ENCODE measurements at regions of chr1 and their contacts with region 1.

Region 1: GRCh38 chr1:26279456-26280332 is at the start of gene SH3BGRL3:
- DNase-seq: peak; percentile 95
- ATAC-seq: peak; percentile 82
- total RNA-seq, gene SH3BGRL3: 33.9 TPM

Region 2: DNA sequence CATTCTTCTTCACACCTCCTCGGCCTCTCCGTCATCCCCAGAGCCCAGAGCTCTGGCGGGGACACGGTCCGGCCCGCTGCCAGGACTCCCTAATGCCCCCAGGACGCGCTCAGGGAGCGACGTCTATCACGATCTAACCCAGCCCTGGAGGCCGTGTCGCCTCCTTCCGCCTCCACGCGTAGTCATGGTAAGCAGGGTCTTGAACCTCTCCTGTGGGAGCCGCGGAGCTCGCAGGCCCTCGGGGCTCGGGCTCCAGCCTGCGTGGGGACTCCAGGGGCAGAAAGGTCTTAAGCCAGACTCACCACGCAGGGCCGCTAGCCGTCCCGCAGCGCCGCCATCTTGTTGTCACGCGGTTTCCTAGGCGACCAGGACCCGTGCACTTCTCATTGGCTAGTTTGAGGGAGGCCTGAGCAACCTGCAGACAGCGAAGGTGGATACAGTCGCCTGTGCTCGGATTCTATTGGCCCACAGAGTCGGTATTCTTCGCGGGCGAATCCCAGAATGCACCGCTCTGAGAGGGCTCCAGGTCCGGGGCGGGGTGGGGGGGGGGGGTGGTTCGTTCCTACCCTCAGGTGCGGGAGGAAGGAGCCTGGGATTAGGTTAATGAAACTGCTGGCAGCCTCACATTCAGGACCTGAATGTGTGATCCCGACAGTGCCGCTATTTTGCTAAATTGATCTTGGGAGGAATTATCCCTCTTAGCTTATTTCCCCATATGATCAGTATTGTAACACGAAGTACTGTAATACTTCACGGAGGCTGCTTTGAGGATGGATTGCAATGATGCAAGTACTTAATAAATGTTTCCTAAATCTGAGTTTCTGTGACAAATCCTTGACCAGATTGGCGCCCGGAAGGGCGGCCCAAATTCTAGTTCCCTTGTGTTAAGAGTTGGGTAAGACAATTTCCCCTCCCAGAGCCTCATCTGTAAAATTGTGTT is 26.9 kb after region 1 on chr1 and contains the start of gene UBXN11:
- intact Hi-C with region 1: no loop called
- DNase-seq: peak; percentile 93
- ATAC-seq: peak; percentile 96
- total RNA-seq, gene UBXN11: 8.3 TPM

Region 3: GRCh38 chr1:26363549-26364448 is 84.1 kb after region 1 on chr1:
- intact Hi-C with region 1: loop called (anchors 10 kb)
- DNase-seq: peak; percentile 90
- ATAC-seq: peak; percentile 84